Activated CD8-positive, alpha-beta memory T cell treated with anti-CD3 and anti-CD28 coated beads, Interleukin-2, amount 10 ng/mL, durations not matched to agents 7 days and 5 days (primary cell): ENCODE measurements at regions of chr10 and their contacts with region 1.

Region 1: DNA sequence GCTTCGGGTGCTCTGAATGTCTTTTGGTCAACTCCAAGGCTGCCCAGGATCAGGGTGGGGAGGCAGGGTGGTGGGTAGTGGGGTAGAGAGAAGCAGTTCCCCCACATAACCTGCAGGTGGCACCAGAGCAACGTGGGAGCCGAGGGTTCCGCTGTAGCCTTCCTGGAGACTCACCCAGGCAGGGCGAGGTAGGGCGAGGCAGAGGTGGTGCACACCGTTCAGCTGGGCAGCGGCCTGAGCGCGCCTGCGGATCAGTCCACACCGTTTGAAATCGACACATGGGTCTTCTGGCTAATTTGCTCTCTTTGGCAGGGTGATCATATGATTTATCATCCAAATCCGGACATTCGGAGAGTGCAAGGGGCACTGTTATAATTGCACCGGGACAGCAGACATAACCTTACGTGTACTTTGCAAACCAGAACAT is 41.4 kb upstream of the MAP3K8 start:
- DNase-seq: peak; percentile 84
- ATAC-seq: peak; percentile 100
- H3K4me3 Mint-ChIP-seq: peak overlapping the region; percentile 46
- H3K27ac Mint-ChIP-seq: no peak overlapping the region
- H3K4me1 Mint-ChIP-seq: peaks cover 10% of the 10 kb centered on the region
- H3K27me3 Mint-ChIP-seq: peaks cover 30% of the 10 kb centered on the region

Region 2: DNA sequence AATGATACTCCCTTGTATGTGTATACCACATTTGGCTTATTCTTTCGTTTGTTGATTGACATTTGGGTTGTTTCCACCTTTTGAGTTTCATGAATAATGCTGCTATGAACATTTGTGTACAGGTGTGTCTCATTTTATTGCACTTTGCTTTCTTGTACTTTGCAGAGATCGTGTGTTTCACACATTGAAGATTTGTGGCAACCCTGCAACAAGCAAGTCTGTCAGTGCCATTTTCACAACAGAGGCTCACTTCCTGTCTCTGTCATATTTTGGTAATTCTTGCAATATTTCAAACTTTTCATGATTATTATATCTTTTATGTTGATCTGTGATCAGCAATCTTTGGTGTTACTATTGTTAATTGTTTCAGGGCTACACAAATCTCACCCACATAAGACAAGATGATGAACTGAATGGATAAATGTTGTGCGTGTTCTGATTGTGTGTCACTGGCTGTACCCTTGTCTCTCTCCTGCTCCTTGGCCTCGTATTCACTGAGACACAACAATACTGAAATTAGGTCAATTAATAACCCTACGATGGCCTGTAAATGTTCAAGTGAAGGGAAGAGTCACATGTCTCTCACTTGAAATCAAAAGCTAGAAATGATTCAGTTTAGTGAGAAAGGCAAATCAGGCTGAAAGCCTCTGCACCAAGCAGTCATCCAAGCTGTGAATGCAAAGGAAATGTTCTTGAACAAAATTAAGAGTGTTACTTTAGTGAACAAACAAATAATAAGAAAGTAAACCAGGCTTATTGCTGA is 199.6 kb before region 1 on chr10:
- CTCF ChIA-PET with region 1: no interaction called
- DNase-seq: no peak
- ATAC-seq: peak; percentile 27
- H3K4me3 Mint-ChIP-seq: no peak overlapping the region
- H3K27ac Mint-ChIP-seq: no peak overlapping the region
- H3K4me1 Mint-ChIP-seq: peaks cover 12% of the 10 kb centered on the region
- H3K27me3 Mint-ChIP-seq: peaks cover 29% of the 10 kb centered on the region

Region 3: GRCh38 chr10:30309401-30309800 is 83.2 kb before region 1 on chr10:
- CTCF ChIA-PET with region 1: no interaction called
- DNase-seq: no peak
- ATAC-seq: no peak
- H3K4me3 Mint-ChIP-seq: no peak overlapping the region
- H3K27ac Mint-ChIP-seq: no peak overlapping the region
- H3K4me1 Mint-ChIP-seq: no peaks in the 10 kb centered on the region
- H3K27me3 Mint-ChIP-seq: no peaks in the 10 kb centered on the region

Region 4: GRCh38 chr10:30534465-30535144 is 142.0 kb after region 1 on chr10:
- CTCF ChIA-PET with region 1: interaction called, 23 read pairs
- DNase-seq: peak; percentile 86
- ATAC-seq: peak; percentile 47
- H3K4me3 Mint-ChIP-seq: no peak overlapping the region
- H3K27ac Mint-ChIP-seq: no peak overlapping the region
- H3K4me1 Mint-ChIP-seq: peaks cover 52% of the 10 kb centered on the region
- H3K27me3 Mint-ChIP-seq: no peaks in the 10 kb centered on the region

Region 5: DNA sequence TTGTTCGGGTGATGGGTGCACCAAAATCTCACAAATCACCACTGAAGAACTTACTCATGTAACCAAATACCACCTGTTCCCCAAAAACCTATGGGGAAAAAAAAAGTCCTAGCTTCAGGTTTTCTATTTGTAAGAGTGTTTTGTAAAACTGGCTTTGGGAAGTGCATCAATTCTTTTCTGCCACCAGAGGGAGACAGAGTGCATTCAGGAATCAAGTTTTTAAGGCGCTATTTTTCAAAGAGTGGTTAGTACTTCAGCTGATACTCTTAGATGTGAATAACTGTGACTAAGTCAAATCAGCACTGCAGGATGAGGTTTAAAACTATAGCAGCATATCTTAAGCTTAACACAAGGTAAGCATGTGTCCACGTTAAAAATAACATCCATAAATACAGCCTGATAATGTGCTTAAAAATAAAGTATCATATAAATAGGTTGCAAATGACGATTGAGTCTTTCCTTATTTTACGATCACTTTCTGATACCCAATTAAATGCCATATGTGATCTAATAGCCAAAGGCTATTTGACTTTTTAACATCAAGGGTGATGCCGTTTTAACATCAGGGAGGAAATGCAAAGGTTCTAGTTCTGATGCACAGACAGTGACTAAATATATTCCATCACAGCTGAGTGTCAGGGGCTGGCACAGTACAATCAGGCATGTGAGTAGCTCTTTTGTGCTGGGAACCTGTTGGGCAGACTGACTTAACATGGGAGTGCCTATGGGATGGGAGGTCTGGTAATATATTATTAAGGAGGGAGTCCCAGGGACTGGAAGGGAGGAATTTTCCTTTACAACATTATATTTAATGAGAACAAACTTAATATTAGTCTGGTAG is 247.6 kb after region 1 on chr10:
- CTCF ChIA-PET with region 1: interaction called, 13 read pairs
- DNase-seq: peak; percentile 38
- ATAC-seq: peak; percentile 30
- H3K4me3 Mint-ChIP-seq: no peak overlapping the region
- H3K27ac Mint-ChIP-seq: no peak overlapping the region
- H3K4me1 Mint-ChIP-seq: peaks cover 18% of the 10 kb centered on the region
- H3K27me3 Mint-ChIP-seq: peaks cover 54% of the 10 kb centered on the region

Region 6: DNA sequence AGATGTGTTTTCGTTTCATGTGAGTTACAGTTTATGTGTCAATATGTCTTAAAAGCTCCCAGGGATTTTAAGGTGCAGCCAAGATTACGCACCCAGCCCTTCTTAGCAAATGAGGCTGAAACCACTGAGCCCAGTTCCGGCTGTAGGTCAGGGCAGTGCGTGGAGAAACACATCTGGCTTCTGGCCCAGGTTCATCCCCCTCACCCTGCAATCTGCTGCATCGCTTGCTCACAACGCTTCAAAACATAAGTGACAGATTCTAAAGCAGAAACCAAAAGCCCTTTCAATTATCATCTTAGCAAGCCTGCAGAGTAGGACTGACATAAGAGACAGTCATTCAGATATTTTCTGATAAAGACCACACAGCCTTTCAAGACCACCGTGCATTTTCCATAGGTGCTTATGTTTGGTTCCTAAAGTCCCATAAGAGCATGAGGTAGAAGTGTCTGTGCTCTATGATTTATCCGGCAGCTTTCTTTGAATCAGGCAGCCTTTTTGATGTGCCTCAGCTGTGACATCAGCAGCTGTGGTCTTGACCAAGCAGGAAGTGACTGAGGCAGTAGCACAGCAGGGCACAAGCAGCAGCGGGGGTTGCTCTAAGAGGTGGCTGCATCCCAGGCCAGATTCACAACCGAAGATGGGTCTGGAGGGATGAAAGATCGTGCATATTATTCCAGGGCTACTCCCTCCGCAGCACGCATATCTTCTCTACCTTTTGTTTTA is 309.0 kb after region 1 on chr10:
- CTCF ChIA-PET with region 1: no interaction called
- DNase-seq: peak; percentile 93
- ATAC-seq: peak; percentile 72
- H3K4me3 Mint-ChIP-seq: peak overlapping the region; percentile 84
- H3K27ac Mint-ChIP-seq: peak overlapping the region; percentile 99
- H3K4me1 Mint-ChIP-seq: peaks cover 82% of the 10 kb centered on the region
- H3K27me3 Mint-ChIP-seq: no peaks in the 10 kb centered on the region